GM10248 (cell line): ENCODE measurements at regions of chr2 and their contacts with region 1.

Region 1: GRCh38 chr2:195575879-195576401 is 81.1 kb upstream of the SLC39A10 start:
- DNase-seq: peak; percentile 38
- CTCF ChIP-seq: peak; percentile 49

Region 2: GRCh38 chr2:195520671-195521155 is 55.2 kb before region 1 on chr2:
- CTCF ChIA-PET with region 1: no interaction called
- POLR2A ChIA-PET with region 1: no interaction called
- DNase-seq: no peak
- CTCF ChIP-seq: no peak

Region 3: GRCh38 chr2:195586062-195586714 is 10.2 kb after region 1 on chr2:
- CTCF ChIA-PET with region 1: interaction called, 17 read pairs
- POLR2A ChIA-PET with region 1: no interaction called
- DNase-seq: no peak
- CTCF ChIP-seq: no peak